ENCODE measurements at regions of chr6 and their contacts with region 1.

Region 1: GRCh38 chr6:117602151-117602898 is at the start of gene GOPC:
- DNase-seq: peak; percentile 99
- total RNA-seq, gene GOPC: 27.5 TPM

Region 2: GRCh38 chr6:117346142-117346930 is 256.0 kb before region 1 on chr6:
- intact Hi-C with region 1: loop called (anchors 2 kb)
- DNase-seq: no peak

Region 3: DNA sequence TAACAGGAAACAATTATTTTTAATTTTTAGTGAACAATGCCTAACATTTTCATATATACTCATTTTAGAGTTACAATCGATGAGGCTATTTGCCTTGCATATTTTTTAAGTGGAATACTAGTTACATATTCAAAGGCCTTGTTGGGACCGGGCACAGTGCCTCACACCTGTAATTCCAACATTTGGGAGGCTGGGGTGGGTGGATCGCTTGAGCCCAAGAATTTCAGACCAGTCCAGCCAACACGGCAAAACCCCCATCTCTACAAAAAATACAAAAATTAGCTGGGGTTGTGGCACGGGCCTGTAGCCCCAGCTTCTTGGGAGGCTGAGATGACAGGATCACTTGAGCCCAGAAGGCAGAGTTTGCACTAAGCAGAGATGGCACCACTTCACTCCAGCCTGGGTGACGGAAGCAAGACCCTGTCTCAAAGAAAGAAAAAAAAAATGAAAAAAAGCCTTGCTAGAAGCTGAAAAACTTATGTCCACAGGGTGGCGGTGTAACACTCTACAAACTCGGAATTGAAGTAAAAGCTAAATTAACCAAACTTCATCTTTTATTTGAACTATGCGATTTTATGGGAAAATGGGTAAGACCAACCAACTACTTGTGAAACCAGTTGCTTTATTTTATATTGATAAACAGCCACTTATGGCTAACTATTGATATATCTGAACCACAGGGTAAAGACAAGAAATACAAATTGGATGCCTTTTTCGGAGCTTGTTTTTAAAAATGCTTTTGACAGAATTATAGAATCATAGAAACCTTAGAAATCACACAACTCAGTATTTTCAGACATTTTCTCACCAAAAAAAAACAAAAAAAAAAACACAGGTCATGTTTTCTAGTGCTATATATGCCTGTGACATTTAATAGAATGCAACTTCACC is 152.5 kb before region 1 on chr6:
- intact Hi-C with region 1: loop called (anchors 5 kb)
- DNase-seq: no peak

Region 4: DNA sequence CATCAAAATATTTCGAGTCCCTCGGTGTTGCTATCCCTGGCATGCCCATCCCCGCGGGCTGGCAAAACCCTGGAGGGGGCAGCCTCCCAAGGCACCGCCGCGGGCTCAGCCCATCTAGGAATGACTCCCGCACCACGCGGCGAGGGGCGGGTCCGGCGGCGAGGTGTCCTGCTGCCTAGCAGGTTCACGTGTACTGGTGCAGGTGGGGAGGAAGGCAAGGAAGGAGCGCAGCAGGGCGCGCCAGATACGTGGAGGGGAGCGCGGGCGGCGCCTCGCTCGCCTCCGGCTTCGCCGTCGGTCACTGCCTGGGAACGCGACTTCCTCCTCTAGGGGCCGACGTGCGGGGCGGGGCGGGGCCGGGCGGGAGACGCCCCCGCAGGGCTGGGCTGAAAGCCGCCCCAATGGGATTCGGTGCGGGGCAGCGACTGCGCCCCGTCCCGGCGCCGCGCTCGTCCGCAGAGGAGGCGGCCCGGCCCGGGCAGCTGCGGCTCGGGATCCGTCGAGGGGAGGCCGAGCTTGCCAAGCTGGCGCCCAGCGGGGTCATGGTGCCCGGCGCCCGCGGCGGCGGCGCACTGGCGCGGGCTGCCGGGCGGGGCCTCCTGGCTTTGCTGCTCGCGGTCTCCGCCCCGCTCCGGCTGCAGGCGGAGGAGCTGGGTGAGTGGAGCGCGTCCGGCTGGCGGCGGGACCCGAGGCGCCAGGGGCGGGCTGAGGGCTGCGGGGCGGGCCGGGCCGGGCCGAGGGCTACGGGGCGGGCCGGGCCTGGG is 119.9 kb before region 1 on chr6 and contains the start of gene DCBLD1:
- intact Hi-C with region 1: loop called (anchors 2 kb)
- DNase-seq: peak; percentile 89
- total RNA-seq, gene DCBLD1: 3.8 TPM

Region 5: DNA sequence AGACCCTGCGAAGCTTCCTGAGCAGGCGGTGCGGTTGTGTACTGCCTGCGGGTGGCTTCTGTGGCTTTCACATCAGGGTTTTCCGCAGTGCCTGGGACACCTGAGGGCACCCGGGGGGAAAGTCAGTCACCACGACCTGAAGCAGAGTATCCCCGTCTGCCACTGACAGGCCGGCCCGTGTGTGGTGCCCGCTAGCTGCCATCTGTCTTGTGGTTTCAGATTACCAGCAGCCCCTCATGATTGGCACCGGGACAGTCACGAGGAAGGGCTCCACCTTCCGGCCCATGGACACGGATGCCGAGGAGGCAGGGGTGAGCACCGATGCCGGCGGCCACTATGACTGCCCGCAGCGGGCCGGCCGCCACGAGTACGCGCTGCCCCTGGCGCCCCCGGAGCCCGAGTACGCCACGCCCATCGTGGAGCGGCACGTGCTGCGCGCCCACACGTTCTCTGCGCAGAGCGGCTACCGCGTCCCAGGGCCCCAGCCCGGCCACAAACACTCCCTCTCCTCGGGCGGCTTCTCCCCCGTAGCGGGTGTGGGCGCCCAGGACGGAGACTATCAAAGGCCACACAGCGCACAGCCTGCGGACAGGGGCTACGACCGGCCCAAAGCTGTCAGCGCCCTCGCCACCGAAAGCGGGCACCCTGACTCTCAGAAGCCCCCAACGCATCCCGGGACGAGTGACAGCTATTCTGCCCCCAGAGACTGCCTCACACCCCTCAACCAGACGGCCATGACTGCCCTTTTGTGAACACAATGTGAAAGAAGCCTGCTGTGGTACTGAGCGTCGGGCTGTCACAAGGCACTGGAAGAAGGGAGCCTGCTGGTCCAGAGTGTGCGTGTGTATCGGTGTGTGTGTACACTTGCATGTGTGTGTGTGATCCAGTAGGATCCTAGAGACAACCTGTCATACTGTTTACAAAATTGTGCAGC is 54.4 kb before region 1 on chr6:
- intact Hi-C with region 1: loop called (anchors 5 kb)
- DNase-seq: peak; percentile 88

Region 6: DNA sequence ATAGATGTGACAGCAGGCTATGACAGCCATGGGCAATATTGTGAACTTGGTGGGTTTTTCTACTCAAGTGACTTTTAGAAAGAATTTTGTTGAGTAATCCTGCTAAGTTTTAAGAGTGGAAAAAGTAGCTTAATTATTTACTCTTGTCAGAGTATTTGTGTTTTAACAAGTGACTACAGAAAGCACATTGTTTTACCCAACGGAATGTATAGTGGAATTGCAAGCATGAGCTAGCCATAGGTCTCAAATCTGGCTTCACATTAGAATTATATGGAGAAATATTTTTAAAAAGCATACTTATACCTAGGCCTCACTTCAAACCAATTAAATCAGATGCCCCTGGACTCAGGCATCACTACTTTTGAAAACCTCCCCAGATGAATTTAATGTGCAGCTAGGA is 35.4 kb after region 1 on chr6:
- intact Hi-C with region 1: no loop called
- DNase-seq: no peak

Region 7: DNA sequence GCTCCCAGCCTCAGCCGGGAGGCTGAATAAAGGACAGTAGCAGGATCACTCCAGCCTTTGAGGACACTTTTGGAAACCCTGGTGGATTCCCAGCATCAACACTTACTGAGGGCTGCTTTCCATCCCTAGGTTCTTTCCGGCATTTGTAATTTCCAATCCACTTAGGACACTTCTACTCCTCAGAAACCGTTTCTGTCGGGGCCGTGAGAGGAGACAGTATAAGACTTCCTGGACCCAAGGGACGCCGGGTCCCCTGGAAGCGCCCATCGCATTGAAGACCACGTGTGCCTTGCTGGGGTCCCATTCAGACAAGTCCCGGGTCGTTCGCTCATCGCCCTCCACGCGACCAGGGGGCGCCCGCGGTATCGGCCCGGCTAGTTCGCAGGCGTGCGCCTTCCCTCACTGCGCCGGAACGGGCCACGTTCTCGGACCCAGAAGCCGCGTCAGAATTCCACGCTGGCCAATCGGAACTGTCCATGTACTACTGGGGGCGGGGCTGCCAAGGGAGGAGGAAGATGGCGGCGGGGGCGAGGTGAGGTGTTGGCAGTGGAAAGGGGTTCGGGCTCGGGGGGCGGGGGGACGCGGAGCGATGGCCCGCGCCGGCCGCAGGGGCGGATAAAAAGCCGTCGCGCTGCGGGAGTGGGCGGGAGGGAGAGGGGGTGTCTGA is 72.8 kb after region 1 on chr6 and contains the start of gene NUS1:
- intact Hi-C with region 1: loop called (anchors 5 kb)
- DNase-seq: peak; percentile 98
- total RNA-seq, gene NUS1: 18.0 TPM

Region 8: DNA sequence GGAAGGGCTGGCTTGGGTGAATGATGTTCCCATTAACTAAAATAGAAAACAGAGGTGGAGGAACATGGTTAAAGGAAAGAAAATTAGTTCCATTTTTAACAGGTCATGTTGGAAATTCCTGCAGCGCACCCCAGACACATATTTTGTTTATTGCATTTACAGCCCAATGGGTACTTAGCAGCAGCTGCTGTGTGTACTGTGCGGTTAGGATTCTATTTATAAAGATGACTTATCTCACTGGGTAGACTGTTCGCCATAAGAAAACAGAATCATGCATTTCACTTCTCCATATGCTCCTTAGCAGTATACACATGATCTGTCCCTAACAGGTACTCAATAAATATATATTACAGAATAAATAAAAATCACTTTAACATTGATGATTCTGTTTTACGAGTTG is 440.5 kb after region 1 on chr6:
- intact Hi-C with region 1: no loop called
- DNase-seq: no peak

Region 9: GRCh38 chr6:118370722-118371121 is 768.4 kb after region 1 on chr6:
- intact Hi-C with region 1: no loop called
- DNase-seq: no peak